ENCODE measurements at regions of chrX and their contacts with region 1.

Region 1: GRCh38 chrX:136168929-136169735 is 21.8 kb downstream of the FHL1 start:
- DNase-seq: peak; percentile 90
- H3K4me3 ChIP-seq: no peak overlapping the region
- CTCF ChIP-seq: no peak

Region 2: DNA sequence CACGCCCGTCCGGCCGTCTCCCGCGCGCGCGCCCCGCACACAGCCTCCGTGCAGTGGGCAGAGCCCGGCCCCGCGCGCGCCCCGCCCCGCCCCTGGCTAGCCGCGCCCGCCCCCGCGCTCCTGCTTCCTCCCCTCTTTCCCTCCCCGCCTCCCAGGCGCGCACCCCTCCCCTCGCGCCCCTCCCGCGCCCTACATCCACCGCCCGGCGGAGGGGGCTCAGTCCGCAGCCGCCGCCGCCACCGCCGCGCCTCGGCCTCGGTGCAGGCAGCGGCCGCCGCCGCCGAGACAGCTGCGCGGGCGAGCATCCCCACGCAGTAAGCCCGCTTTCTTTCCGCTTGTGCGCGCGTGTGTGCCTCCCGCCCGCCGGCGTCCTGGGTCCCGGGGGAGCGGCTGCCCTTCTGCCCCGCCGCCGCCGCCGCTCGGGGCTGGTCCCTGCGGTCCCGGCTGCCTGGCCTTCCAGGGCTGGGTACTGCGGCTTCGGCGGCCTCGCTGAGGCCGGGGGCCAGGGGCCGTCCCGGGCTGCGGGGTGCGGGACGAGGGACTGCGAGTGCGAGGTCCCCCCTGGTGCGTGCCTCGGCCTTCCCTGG is 21.7 kb before region 1 on chrX and contains the start of gene FHL1:
- CTCF ChIA-PET with region 1: no interaction called
- POLR2A ChIA-PET with region 1: no interaction called
- DNase-seq: no peak
- H3K4me3 ChIP-seq: peak within 1 kb of the TSS; percentile 61
- CTCF ChIP-seq: no peak

Region 3: DNA sequence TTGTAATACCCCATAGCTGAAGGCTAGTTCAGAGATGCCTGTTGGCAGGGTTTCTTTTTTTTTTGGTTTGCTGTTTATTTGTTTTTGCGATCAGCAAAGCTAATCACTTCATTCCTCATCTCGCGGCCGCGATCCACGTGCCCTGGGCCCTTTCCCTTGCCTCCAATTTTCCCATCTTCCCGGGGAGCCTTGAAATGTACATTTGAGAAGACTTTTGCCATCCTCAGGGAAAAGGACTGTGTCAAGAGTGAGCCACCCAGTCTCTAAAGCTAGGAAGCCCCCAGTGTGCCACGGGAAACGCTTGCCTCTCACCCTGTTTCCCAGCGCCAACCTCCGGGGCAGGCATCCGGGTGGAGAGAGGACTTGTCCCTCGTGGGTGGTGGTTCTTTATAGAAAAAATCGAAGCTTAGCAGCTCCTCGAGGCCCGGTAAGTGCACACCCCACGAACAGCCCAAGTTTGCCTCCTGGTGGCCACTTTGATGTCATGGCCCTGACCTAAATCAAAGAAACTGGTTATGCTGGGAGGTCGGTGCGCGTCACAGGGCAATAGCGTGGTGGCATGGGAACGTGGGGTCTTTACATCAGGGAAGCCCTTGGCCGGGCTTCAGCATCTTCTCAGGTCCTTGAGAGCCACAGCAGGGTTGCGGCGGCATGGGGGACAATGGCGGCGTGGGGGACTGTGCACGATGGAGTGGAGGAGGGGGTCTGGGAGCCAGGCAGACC is 40.0 kb after region 1 on chrX:
- CTCF ChIA-PET with region 1: interaction called, 30 read pairs
- POLR2A ChIA-PET with region 1: interaction called, 4 read pairs
- DNase-seq: no peak
- H3K4me3 ChIP-seq: no peak overlapping the region
- CTCF ChIP-seq: peak; percentile 57

Region 4: DNA sequence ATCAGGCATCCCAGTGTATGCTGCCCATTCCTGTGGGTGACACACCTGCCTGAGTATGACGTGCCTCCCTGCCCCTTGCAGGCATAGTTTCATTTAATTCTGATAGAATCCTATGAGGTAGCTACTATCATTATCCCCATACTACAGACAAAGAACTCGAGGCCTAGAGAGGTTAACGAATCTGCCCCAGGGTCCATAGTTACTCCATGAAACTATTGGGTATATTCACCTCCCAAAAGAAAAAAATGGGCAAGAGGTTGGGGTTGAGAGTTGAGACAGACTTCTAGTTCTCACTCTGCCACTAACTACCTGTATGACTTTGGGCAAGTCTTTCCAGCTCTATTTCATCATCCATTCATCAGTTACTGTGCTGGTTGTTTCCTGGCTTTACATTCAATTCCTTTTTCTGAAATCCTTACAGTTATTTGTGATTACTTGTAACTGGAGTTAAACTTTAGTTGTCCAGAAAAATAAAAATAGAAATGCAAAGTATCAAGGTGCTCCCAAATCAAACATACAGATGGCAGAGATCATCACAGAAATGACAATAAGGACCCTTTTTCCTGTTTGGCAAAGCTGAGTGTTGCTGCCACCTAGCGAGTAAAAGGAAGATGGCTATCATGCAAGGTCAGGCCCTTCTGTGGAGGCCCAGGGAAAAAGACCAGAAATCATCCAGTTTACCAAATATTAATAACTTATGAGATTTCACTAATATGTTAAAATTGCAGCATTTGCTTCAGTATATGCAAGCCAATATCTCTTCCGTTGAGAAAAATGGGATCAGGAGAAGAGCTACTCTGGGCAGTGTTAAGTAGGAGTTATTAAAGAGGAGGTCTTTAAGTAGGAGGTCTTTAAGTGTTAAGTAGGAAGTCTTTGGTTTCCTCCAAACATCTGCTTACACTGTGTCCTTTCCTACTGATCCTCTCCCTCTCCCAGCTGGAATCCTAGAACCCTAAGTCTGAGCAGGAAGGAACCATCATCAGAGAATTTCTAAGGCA is 99.2 kb after region 1 on chrX:
- CTCF ChIA-PET with region 1: interaction called, 33 read pairs
- POLR2A ChIA-PET with region 1: no interaction called
- DNase-seq: no peak
- H3K4me3 ChIP-seq: no peak overlapping the region
- CTCF ChIP-seq: peak; percentile 57

Measured in AG04449 (cell line).